ENCODE measurements at regions of chr6 and their contacts with region 1.

Region 1: DNA sequence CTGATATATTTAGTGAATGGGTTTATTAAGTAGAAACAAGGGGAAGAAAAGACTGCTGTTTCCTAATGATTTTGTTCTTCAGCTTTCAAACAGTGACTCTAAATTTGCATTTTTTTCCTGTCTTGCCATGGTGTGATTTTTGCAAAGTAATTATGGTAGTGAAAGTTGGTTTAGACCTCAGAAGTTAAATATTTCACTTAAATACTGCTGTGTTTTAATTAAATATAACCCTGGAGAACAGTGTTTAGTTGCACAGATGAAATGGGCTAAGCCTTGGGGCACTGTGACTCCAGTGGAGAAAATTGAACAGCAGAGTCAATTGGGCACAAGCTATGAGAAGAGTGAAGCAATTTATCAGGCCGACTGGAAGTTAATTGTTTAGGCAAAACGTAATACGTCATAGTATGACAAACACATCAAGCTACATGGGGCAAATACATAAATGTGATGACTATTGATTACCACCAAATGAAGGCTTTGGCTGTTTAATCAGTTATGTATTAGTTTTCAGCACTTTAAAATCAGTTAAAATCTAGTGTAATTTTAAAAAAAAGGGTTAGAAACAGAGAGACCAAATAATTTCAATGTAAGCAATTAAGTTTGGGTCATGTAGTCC is 111.2 kb upstream of the MCHR2 start:
- DNase-seq: no peak
- H3K4me3 ChIP-seq: no peak overlapping the region
- H3K27ac ChIP-seq: no peak overlapping the region
- H3K4me1 ChIP-seq: no peaks in the 10 kb centered on the region
- H3K27me3 ChIP-seq: no peaks in the 10 kb centered on the region
- CTCF ChIP-seq: no peak
- EP300 ChIP-seq: no peak
- POLR2A ChIP-seq: no peak
- RAD21 ChIP-seq: no peak

Region 2: DNA sequence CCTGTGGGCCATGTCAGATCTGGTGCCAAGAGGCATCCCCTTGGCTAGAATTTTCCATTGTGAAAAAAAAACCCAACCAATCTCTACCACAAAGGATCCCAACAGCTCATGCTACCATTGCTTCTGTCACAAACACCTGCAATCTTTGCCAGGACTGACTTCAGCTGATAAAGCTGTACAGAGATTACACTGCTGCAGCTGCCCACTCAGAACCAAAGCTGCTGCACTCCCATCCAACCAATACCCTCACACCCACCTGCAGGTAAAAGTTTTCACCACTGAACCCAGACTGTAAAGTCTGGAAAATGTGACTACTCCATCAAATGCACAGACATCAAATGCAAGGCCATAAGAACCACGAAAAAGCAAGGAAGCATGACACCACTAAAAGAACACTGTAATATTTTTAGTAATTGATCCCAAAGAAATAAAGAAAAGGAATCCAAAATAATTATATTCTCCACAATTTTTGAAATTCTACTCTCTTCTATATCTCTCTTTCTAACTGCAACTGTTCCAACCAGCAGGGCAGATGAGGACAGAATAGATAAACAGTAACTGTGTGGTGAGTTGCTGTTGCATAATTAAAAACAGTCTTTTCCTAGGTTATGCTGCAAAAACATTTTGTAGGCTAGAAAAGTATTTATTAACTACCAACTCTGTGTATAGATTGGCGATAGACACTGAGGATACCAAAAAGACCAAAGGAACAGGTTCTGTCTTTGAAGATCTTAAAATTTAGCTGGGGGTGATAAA is 16.8 kb after region 1 on chr6:
- CTCF ChIA-PET with region 1: interaction called, 24 read pairs
- POLR2A ChIA-PET with region 1: no interaction called
- DNase-seq: no peak
- H3K4me3 ChIP-seq: no peak overlapping the region
- H3K27ac ChIP-seq: no peak overlapping the region
- H3K4me1 ChIP-seq: no peaks in the 10 kb centered on the region
- H3K27me3 ChIP-seq: no peaks in the 10 kb centered on the region; a peak in 1 of 7 replicates
- CTCF ChIP-seq: no peak
- EP300 ChIP-seq: no peak
- POLR2A ChIP-seq: no peak
- RAD21 ChIP-seq: no peak

Region 3: DNA sequence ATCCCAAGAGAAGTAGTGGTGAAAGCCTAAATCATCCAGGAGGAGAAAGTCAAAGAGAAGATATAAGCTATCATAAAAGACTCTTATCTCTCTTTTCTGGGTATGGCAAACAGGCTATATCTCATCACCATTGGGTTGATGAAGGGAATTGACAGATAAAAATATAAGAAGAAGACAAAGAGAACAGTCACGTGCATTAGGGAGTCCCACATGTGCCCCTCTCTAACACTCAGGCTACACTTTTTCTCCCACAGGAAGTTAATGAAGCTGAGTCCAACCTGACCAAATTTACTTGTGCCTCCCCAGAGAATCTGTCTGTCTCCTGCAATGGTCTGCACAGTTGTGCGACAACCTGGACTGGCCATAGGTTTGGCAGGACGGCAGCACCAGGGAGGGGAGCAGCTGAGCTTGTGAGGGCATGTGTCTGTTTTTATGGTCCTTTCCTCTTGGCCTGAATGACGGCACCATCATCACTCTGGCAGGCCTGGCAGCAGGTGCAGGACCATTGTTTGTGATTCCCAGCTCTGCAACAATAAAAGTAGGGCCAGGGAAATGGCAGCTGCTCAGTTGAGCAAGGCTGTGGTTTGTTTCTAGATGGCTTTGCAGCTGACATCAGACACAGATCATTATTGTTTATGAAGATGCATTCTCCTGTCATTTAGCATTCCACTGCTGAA is 33.2 kb after region 1 on chr6:
- CTCF ChIA-PET with region 1: interaction called, 12 read pairs
- POLR2A ChIA-PET with region 1: no interaction called
- DNase-seq: no peak
- H3K4me3 ChIP-seq: no peak overlapping the region
- H3K27ac ChIP-seq: no peak overlapping the region
- H3K4me1 ChIP-seq: no peaks in the 10 kb centered on the region
- H3K27me3 ChIP-seq: no peaks in the 10 kb centered on the region
- CTCF ChIP-seq: no peak
- EP300 ChIP-seq: no peak
- POLR2A ChIP-seq: no peak
- RAD21 ChIP-seq: no peak

Region 4: DNA sequence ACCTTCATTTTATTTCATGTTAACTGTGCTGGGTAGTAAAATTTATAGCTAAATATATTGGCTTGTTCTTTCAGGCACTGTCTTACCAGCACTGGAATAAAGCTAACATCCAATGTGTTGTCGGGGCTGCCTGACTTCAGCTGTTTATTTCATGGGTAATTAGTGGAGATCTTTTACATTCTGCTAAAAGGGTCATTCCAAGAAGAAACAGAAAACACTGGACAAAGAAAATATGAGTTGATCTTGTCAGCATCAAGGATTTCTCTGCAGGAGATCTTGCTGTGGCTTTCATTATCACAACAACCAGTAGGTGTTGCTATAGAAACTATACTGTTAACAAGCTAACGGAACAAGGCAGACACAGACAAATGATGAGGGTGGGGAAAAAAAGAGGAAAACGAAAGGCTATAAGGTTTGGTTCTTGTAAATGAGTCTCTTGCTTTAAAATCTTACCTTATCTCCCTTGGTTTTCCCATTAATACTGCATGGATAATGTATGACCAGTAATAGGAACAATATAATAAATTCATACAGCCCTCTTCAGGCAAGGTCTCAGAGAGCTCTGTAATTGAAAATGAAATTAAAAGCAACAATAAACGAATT is 152.6 kb after region 1 on chr6:
- CTCF ChIA-PET with region 1: no interaction called
- POLR2A ChIA-PET with region 1: no interaction called
- DNase-seq: no peak
- H3K4me3 ChIP-seq: no peak overlapping the region
- H3K27ac ChIP-seq: no peak overlapping the region
- H3K4me1 ChIP-seq: peaks cover 0 to 2% (median 0%) of the 10 kb centered on the region in 4 experiments; a peak in 2 of 7 replicates
- H3K27me3 ChIP-seq: no peaks in the 10 kb centered on the region
- CTCF ChIP-seq: peak in 1 of 3 experiments; percentile 28; a peak in 1 of 4 replicates
- EP300 ChIP-seq: no peak
- POLR2A ChIP-seq: no peak
- RAD21 ChIP-seq: peak; percentile 15 to 31; a peak in 3 of 4 replicates

Region 5: GRCh38 chr6:100472674-100473073 is 367.4 kb after region 1 on chr6:
- CTCF ChIA-PET with region 1: interaction called, 45 read pairs
- POLR2A ChIA-PET with region 1: no interaction called
- DNase-seq: no peak
- H3K4me3 ChIP-seq: no peak overlapping the region
- H3K27ac ChIP-seq: no peak overlapping the region
- H3K4me1 ChIP-seq: peaks cover 0 to 6% (median 4%) of the 10 kb centered on the region in 4 experiments; a peak in 5 of 7 replicates
- H3K27me3 ChIP-seq: peaks cover 25 to 44% (median 33%) of the 10 kb centered on the region in 4 experiments
- CTCF ChIP-seq: no peak
- EP300 ChIP-seq: no peak
- POLR2A ChIP-seq: no peak
- RAD21 ChIP-seq: no peak; a peak in 1 of 4 replicates

Region 6: GRCh38 chr6:100479179-100480035 is 374.2 kb after region 1 on chr6:
- CTCF ChIA-PET with region 1: interaction called, 45 read pairs
- POLR2A ChIA-PET with region 1: no interaction called
- DNase-seq: no peak
- H3K4me3 ChIP-seq: no peak overlapping the region
- H3K27ac ChIP-seq: no peak overlapping the region
- H3K4me1 ChIP-seq: no peaks in the 10 kb centered on the region
- H3K27me3 ChIP-seq: no peaks in the 10 kb centered on the region
- CTCF ChIP-seq: peak in 2 of 3 experiments; percentile 57 to 70; a peak in 3 of 4 replicates
- EP300 ChIP-seq: no peak
- POLR2A ChIP-seq: no peak
- RAD21 ChIP-seq: peak; percentile 90 to 92